Common myeloid progenitor, CD34-positive (primary cell): ENCODE measurements at regions of chr11 and their contacts with region 1.

Region 1: DNA sequence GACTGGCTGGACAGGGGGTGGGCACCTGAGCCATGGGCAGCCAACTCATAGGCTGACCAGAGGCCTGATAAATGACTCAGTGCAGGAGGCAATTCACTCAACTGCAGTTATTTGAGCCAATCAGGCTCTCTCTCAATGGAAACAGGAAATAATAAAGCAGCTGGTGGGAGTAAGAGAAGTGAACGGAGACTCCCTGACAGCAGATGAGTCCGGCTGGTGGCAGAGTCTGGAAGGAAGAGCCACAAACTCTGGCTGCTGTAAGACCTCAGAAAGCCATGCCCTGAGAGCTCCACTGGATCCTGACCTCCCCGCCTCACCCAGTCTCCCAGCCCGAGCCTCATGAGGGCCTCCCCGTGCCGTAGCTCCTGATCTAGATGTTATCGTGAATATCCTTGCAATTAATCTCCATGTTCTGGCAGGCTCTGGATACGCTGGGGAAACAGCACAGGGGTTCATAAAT is 69.8 kb downstream of the TRIM29 start:
- DNase-seq: peak in 2 of 3 donors; percentile 76 to 85
- H3K4me3 ChIP-seq: peak overlapping the region in 1 of 7 experiments; percentile 31
- H3K27ac ChIP-seq: no peak overlapping the region
- H3K4me1 ChIP-seq: peaks cover 0 to 13% (median 5%) of the 10 kb centered on the region in 4 experiments
- H3K27me3 ChIP-seq: peaks cover 0 to 8% (median 2%) of the 10 kb centered on the region in 5 experiments

Region 2: DNA sequence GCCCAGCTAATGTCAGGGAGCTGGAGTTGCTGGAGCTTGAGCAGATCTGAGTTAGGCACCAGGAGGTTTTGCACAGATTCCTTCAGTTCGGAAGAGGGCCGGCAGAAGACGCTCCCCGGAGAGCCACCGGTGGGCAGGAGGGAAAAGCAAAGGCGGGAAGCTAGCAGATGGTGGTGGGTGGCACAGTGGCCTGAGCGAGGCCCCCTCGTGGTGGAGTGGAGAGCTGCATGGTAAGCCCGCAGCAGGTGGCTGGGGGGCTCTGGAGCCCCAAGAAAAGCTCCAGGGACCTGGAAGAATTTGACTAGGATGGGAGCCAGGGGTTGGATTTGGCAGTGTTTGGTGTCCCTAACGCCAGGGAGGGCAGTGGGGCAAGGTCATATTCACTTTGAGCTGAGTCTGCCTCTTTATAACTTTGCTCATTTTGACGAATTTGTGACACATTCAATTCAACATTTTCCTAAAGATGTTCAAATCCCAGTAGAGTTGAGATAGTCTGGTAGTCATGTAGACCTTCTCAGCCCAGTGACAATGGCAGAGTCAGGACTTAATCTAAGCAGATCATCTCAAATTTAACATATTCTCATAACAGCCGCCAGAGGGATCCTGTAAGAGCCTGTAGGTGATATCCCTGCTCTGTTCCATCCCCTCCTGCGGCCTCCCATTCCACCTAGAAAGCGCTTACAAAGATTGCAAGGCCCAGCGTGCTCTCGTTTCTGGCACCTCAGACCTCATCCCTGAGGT is 11.8 kb after region 1 on chr11:
- CTCF ChIA-PET with region 1: interaction called, 11 read pairs
- POLR2A ChIA-PET with region 1: no interaction called
- DNase-seq: peak in 2 of 3 donors; percentile 28 to 43
- H3K4me3 ChIP-seq: no peak overlapping the region
- H3K27ac ChIP-seq: no peak overlapping the region
- H3K4me1 ChIP-seq: no peaks in the 10 kb centered on the region
- H3K27me3 ChIP-seq: peaks cover 0 to 2% (median 0%) of the 10 kb centered on the region in 5 experiments